ENCODE measurements at regions of chr12 and their contacts with region 1.

Region 1: DNA sequence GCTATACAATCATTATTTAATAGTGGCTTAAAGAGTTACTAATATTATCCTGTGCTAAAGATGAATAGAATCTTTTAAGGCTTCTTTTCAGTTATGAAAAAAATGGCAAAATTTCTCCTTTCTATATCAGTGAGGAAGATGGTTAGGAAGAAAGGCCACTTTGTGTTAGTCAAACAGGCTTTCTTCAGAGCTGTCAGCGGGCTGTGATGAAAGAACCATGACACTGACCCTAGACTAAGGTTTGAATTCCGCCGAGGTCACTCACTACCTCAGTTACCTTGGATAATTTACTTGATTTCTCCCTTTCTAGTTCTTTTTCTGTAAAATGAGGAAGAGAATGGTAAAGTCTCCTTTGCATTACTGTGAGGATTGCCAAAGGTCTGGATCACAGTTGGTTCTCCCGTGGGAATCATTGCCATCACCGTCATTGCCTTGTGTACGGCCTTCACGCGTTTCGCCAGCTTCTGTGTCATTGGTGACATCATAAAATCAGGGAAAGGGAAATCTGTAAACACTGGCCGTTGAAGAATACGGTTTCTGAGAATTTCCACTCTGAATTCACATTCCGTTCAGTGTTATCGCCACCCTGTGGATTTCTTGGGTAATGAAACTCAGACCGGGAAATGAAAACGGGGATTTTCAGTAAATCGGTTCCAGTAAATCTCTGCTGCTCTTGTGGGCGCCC is 26.7 kb upstream of the YBX3 start:
- DNase-seq: peak; percentile 86
- H3K4me3 ChIP-seq: peak overlapping the region; percentile 12
- H3K27ac ChIP-seq: peak overlapping the region; percentile 1
- H3K4me1 ChIP-seq: no peaks in the 10 kb centered on the region
- H3K27me3 ChIP-seq: no peaks in the 10 kb centered on the region
- CTCF ChIP-seq: peak; percentile 86

Region 2: GRCh38 chr12:10235761-10236631 is 513.8 kb before region 1 on chr12:
- intact Hi-C with region 1: loop called (anchors 5 kb)
- DNase-seq: no peak
- H3K4me3 ChIP-seq: no peak overlapping the region
- H3K27ac ChIP-seq: no peak overlapping the region
- H3K4me1 ChIP-seq: no peaks in the 10 kb centered on the region
- H3K27me3 ChIP-seq: no peaks in the 10 kb centered on the region
- CTCF ChIP-seq: peak; percentile 86

Region 3: GRCh38 chr12:10466311-10466710 is 283.5 kb before region 1 on chr12:
- intact Hi-C with region 1: no loop called
- DNase-seq: no peak
- H3K4me3 ChIP-seq: no peak overlapping the region
- H3K27ac ChIP-seq: no peak overlapping the region
- H3K4me1 ChIP-seq: no peaks in the 10 kb centered on the region
- H3K27me3 ChIP-seq: no peaks in the 10 kb centered on the region
- CTCF ChIP-seq: no peak

Region 4: DNA sequence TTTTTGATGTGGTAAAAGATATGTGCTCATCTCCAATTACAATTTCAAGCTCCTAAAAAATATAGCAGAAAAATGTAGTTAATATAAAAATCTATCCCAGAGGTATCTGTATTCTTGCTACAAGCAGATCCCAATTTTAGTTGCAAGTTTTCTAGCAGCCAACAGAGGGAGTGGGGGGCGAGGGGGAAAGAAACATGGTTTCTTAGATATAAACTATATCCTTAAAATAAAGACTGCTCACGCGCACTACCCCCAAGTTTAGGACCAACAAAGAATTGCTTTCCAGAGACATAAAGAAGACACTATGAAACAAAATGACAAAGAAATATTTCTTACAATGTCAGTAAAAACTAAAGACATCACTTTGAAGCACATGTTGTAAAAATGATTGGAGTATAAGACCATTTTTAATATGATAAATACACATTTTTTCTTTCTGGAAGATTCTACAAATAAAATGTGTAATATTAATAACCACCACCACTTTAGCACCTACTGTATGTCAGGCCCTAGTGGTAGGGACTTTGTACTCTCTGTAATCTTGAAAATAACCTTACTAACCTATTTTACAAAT is 141.9 kb before region 1 on chr12:
- intact Hi-C with region 1: loop called (anchors 10 kb)
- DNase-seq: no peak
- H3K4me3 ChIP-seq: no peak overlapping the region
- H3K27ac ChIP-seq: no peak overlapping the region
- H3K4me1 ChIP-seq: no peaks in the 10 kb centered on the region
- H3K27me3 ChIP-seq: no peaks in the 10 kb centered on the region
- CTCF ChIP-seq: peak; percentile 10